ENCODE measurements at regions of chr20 and their contacts with region 1.

Region 1: GRCh38 chr20:23050847-23051631 is 1.6 kb upstream of the THBD start:
- DNase-seq: peak; percentile 87 to 93
- H3K4me3 ChIP-seq: peak overlapping the region; percentile 63 to 82
- H3K27ac ChIP-seq: peak overlapping the region; percentile 88 to 97
- H3K4me1 ChIP-seq: peaks cover 0 to 46% (median 35%) of the 10 kb centered on the region in 4 donors
- H3K27me3 ChIP-seq: no peaks in the 10 kb centered on the region
- CTCF ChIP-seq: peak; percentile 74 to 75

Region 2: DNA sequence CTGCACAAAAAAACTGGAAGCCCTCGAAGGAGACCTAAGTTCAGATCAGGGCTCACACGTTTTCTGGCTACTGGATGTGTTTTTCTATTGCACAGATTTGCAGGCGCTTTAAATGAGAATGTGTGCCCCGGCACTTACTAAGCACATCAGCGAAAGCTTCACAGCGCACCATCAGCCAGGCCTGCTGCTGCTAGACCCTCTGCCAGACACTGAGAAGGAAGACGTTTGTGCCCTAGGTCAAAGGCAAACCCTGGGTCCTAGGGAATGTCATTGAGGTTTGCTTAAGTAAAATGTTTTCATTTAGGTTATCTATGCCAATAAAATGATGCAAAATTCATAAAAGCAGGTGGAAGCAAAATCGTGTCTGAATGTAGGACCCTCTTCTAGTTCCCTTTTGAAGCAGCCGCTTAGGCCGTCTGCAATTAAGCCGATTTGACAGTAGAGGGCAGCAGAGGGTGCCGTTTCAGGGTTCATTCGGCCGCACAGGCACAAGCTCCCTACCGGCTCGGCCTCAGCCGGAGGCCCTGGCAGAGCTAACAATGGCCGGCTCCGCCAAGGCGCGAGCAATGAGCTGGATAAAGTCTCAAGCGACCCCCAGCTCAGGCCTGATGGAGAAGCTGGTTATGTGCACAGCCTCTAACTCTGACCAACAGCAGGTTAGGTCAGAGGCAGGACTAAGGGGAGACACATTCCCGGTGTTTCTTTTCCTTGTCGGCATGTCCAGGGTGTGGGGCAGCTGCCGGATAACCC is 359.5 kb before region 1 on chr20:
- intact Hi-C with region 1: loop called (anchors 5 kb)
- DNase-seq: peak; percentile 75 to 88
- H3K4me3 ChIP-seq: peak overlapping the region; percentile 5 to 6
- H3K27ac ChIP-seq: peak overlapping the region in 1 of 2 donors; percentile 51
- H3K4me1 ChIP-seq: peaks cover 0 to 22% (median 12%) of the 10 kb centered on the region in 4 donors
- H3K27me3 ChIP-seq: no peaks in the 10 kb centered on the region
- CTCF ChIP-seq: peak; percentile 93 to 97

Region 3: DNA sequence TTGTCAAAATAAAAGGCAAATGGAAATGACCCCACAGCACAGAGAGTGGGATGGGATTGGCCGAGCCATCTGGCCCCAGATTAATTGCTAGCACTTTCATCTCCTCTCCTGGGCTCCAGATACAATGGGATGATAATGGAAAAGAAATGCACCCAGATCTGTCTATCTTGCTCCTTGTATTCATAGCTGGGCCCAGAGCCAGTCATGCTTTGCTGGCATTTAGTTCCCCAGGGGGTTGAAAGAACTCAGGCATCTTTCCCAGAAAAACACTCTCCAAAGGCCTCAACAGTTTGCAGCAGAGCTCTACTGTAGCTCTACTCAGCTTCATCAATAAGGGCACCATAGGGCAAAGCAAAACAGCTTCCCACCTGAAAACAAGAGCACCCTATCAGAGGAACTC is 350.7 kb before region 1 on chr20:
- intact Hi-C with region 1: loop called (anchors 5 kb)
- DNase-seq: peak; percentile 45 to 80
- H3K4me3 ChIP-seq: no peak overlapping the region
- H3K27ac ChIP-seq: peak overlapping the region in 1 of 2 donors; percentile 31
- H3K4me1 ChIP-seq: peaks cover 0 to 26% (median 18%) of the 10 kb centered on the region in 4 donors
- H3K27me3 ChIP-seq: no peaks in the 10 kb centered on the region
- CTCF ChIP-seq: no peak

Region 4: DNA sequence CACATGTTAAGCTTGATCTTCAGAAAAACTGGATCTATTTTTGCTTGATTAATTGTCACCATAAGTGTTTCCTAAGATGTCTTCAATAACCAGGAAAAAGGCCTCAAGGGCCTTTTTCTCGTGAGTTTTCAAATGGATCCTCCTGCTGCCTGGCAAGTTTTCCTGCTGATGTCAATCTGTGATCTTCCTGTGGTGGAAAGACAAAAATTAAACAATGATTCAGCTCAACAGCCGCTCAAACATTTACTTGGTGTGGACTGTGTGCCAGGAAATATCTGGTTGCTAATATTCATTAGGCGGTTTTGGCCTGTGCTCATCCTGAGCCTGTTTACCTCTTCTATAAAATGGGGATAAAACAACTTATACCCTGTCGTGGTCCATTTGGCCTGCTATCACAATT is 51.3 kb before region 1 on chr20:
- intact Hi-C with region 1: no loop called
- DNase-seq: no peak
- H3K4me3 ChIP-seq: no peak overlapping the region
- H3K27ac ChIP-seq: no peak overlapping the region
- H3K4me1 ChIP-seq: no peaks in the 10 kb centered on the region
- H3K27me3 ChIP-seq: no peaks in the 10 kb centered on the region
- CTCF ChIP-seq: no peak

Region 5: DNA sequence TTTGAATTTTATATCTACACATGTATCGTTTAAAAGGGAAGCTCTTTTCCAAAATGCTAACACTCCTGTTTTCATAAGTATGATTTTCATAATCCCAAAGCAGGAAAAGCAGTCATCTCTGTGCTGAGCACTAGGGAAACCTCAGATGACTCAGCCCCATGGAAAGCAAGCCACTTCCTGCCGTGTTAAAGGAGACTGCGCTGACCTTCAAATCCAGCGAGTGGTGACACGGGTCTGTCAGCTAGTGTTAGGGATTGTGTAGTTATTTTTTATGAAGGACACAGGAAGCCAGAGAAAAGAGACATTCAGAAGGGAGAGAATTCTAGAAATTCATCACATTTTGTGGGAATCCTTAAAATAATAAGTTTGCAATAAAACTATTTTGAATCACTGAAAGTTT is 92.1 kb after region 1 on chr20:
- intact Hi-C with region 1: loop called (anchors 5 kb)
- DNase-seq: peak; percentile 85 to 86
- H3K4me3 ChIP-seq: no peak overlapping the region
- H3K27ac ChIP-seq: peak overlapping the region; percentile 66 to 91
- H3K4me1 ChIP-seq: peaks cover 3 to 72% (median 36%) of the 10 kb centered on the region in 4 donors
- H3K27me3 ChIP-seq: no peaks in the 10 kb centered on the region
- CTCF ChIP-seq: peak in 1 of 2 experiments; percentile 31

Region 6: GRCh38 chr20:23235173-23236027 is 184.4 kb after region 1 on chr20:
- intact Hi-C with region 1: loop called (anchors 5 kb)
- DNase-seq: peak; percentile 73 to 81
- H3K4me3 ChIP-seq: no peak overlapping the region
- H3K27ac ChIP-seq: no peak overlapping the region
- H3K4me1 ChIP-seq: peaks cover 0 to 5% (median 0%) of the 10 kb centered on the region in 4 donors
- H3K27me3 ChIP-seq: no peaks in the 10 kb centered on the region
- CTCF ChIP-seq: peak; percentile 66 to 78

Region 7: GRCh38 chr20:23350196-23350903 is 299.3 kb after region 1 on chr20 and contains the start of gene NXT1:
- intact Hi-C with region 1: loop called (anchors 10 kb)
- DNase-seq: peak; percentile 96 to 99
- H3K4me3 ChIP-seq: peak within 1 kb of the TSS; percentile 69 to 97
- H3K27ac ChIP-seq: peak within 1 kb of the TSS; percentile 99 to 100
- H3K4me1 ChIP-seq: peaks cover 0 to 24% (median 20%) of the 10 kb centered on the region in 4 donors
- H3K27me3 ChIP-seq: no peaks in the 10 kb centered on the region
- CTCF ChIP-seq: no peak

Region 8: DNA sequence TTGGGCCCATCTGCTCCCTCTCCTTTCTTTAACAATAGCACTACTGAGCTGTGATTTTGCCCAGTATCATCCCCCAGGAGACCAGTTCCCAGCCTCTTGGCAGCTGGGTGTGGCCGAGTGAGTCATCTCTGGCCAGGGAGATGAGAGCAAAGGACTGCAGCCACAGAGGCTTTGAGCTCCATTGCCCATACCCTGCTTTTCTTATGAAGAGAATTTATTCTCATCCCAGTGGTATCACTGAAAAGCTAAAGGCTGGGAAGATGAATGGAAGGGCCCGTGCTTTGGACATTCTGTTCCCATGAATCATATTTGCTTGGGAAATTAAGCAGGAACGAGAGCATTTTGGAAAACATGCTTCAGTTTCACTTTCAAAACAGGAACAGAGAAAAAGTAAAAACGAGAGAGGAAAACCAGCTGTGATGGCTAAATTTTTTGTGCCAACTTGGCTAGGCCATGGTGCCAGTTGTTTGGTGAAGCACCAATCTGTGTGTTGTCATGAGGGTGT is 571.9 kb after region 1 on chr20:
- intact Hi-C with region 1: loop called (anchors 5 kb)
- DNase-seq: peak; percentile 87
- H3K4me3 ChIP-seq: peak overlapping the region; percentile 37 to 39
- H3K27ac ChIP-seq: peak overlapping the region; percentile 84 to 87
- H3K4me1 ChIP-seq: peaks cover 0 to 28% (median 10%) of the 10 kb centered on the region in 4 donors
- H3K27me3 ChIP-seq: no peaks in the 10 kb centered on the region
- CTCF ChIP-seq: no peak

Region 9: GRCh38 chr20:23680146-23680545 is 629.1 kb after region 1 on chr20:
- intact Hi-C with region 1: no loop called
- DNase-seq: peak in 1 of 2 donors; percentile 43
- H3K4me3 ChIP-seq: no peak overlapping the region
- H3K27ac ChIP-seq: no peak overlapping the region
- H3K4me1 ChIP-seq: no peaks in the 10 kb centered on the region
- H3K27me3 ChIP-seq: no peaks in the 10 kb centered on the region
- CTCF ChIP-seq: no peak

Measured in tibial artery (tissue), 4 donors.